ENCODE measurements at regions of chr1 and their contacts with region 1.

Region 1: GRCh38 chr1:37498872-37499617 is 15.5 kb downstream of the MEAF6 start:
- DNase-seq: peak; percentile 41
- H3K4me3 ChIP-seq: no peak overlapping the region
- CTCF ChIP-seq: no peak

Region 2: DNA sequence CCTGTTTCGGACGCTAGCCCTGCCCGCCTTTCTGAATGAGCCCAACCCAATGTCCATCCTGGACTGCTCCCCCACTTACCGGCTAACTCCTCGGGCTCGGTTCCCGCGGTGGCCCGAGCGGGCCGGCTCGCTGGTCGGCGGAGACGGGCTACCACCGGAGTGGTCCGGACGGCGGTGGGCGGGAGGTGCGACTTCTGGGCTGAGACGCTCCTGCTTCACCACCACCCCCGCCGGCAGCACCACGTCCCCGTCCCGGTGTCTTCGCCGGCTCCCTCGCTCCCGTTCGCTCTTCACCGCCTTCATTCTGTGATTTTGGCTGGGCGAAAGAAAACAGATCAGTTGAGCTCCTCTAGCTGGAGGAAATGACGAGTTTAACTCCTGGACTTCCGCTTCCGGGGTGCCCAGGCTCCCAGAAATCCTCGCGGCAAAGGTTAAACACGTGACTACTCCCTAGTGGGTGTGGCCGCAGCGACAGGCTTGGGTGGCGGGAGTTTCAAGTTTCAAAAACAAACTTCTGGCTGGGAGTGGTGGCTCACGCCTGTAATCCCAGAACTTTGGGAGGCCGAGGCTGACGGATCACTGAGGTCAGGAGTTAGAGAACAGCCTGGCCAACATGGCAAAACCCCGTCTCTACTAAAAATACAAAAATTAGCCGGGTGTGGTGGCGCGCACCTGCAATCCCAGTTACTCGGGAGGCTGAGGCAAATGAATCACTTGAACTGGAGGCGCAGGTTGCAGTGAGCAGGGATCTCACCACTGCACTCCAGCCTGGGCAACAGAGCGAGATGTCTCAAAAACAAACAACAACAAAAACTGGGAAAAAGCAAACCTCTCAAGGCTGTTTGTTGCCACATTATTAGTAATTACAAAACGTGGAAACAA is 55.1 kb after region 1 on chr1 and contains the start of gene SNIP1:
- in situ Hi-C with region 1: loop called (anchors 10 kb)
- DNase-seq: peak; percentile 76
- H3K4me3 ChIP-seq: peak within 1 kb of the TSS; percentile 98
- CTCF ChIP-seq: no peak

Measured in astrocyte of the cerebellum (primary cell).